ENCODE measurements at regions of chr7 and their contacts with region 1.

Region 1: GRCh38 chr7:113142385-113143119 is 24.2 kb upstream of the SMIM30 start:
- DNase-seq: no peak
- H3K4me3 ChIP-seq: no peak overlapping the region
- H3K27me3 ChIP-seq: no peaks in the 10 kb centered on the region
- CTCF ChIP-seq: no peak

Region 2: DNA sequence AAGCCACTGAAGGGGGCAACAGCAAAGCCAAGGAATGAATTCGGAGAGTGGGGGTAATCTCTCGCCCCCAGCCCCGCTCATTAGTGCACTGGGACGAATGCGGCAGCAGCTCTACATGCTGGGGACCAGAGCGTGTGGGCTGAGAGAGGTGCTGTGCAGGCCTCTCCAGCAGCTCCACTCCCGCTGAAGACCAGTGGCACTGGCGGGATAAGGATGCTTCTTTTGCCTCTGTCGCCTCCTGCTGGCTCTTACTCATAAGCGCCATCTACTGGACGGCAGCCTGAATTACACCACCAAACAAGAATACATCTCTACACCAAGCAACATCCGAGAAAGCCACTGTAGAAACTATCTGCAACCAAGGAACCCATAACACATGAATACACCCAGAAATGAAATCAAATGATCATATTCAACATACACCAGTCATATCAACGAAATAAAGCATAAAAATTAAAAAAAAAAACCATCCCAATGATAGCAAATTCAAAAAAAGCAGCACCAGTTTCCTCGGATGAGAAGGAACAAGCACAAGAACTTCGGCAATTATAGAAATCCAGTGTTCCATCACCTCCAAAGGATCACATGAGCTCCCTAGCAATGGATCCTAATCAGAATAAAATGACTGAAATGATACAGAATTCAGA is 273.3 kb before region 1 on chr7:
- CTCF ChIA-PET with region 1: no interaction called
- POLR2A ChIA-PET with region 1: no interaction called
- DNase-seq: no peak
- H3K4me3 ChIP-seq: no peak overlapping the region
- H3K27me3 ChIP-seq: no peaks in the 10 kb centered on the region
- CTCF ChIP-seq: peak; percentile 77

Region 3: GRCh38 chr7:113086431-113086888 is 56.1 kb before region 1 on chr7 and contains the start of gene GPR85:
- CTCF ChIA-PET with region 1: no interaction called
- POLR2A ChIA-PET with region 1: interaction called, 19 read pairs
- DNase-seq: no peak
- H3K4me3 ChIP-seq: peak within 1 kb of the TSS; percentile 55
- H3K27me3 ChIP-seq: no peaks in the 10 kb centered on the region
- CTCF ChIP-seq: no peak
- polyA plus RNA-seq, gene GPR85: 2.6 and 4.8 TPM in 2 replicates

Region 4: GRCh38 chr7:113628948-113629847 is 486.6 kb after region 1 on chr7:
- CTCF ChIA-PET with region 1: no interaction called
- POLR2A ChIA-PET with region 1: no interaction called
- DNase-seq: no peak
- H3K4me3 ChIP-seq: no peak overlapping the region
- H3K27me3 ChIP-seq: no peaks in the 10 kb centered on the region
- CTCF ChIP-seq: no peak

Measured in BJ (cell line).